Breast epithelium (tissue), 4 donors: ENCODE measurements at regions of chr12 and their contacts with region 1.

Region 1: DNA sequence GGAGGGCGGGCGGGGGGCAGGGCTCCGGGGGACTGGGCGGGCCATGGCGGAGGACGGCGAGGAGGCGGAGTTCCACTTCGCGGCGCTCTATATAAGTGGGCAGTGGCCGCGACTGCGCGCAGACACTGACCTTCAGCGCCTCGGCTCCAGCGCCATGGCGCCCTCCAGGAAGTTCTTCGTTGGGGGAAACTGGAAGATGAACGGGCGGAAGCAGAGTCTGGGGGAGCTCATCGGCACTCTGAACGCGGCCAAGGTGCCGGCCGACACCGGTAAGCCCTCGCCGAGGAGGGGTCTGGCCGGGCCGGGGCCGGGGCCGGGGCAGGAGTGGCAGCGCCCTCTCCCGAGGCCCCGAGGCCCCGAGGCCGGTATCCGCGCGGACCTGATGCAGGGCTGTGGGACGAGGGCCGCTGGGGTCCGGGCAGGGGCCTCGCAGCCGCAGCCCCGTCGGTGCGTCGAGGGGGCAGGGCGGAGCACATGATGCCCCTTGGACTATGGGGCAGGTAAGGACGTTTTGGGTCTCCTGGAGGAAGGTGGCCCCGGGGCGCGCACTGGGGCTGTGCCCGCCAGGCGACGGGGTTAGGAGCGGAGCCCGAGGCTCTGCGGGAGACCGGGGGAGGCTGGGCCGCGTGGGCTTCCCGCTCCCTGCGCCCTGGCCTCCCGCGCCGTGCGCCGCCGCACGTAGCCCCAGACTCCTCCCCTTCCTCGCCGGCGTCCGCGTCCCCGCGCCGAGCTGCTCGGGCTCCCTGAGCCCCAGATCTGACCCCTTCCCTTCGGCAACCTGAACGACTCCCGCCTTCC is at the start of gene TPI1:
- DNase-seq: peak; percentile 68 to 90
- H3K4me3 ChIP-seq: peak within 1 kb of the TSS; percentile 90 to 100 (median 94)
- H3K27ac ChIP-seq: peak within 1 kb of the TSS; percentile 95 to 96
- H3K4me1 ChIP-seq: peaks cover 5 to 27% of the 10 kb centered on the region in 2 donors
- H3K27me3 ChIP-seq: no peaks in the 10 kb centered on the region
- CTCF ChIP-seq: peak in 1 of 3 donors; percentile 12
- POLR2A ChIP-seq: peak; percentile 94
- total RNA-seq, gene TPI1: 297 to 386 (median 351) TPM

Region 2: DNA sequence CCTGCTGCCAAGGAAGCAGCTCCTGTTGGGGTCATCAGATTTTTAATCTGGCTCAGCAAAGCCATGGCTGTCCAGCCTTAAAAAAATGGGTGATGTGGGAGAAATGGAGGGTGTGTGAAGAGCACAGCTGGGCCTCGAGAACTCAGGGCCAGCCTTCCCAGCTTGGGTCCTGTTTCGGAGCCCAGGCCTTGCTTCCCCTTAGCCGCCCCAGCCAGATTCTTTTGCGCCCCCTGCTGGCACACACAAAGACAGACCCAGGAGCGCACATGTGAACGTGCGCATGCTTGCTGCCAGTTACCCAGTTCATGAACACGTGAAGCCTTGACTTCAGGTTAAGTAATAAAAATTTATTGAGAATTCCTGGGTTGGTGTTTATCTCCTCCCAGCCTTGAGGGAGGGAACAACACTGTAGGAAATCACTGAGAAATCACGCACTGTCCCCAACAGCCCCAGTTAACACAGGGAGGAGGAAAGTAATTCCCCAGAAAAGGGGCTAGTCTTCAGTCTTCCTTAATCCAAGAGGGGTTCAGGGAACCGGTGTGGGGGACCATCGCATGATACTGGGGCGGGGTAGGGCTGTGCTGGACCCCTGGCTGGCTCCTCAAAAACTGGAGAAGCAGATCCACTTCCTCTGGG is 97.5 kb after region 1 on chr12:
- intact Hi-C with region 1: loop called (anchors 10 kb)
- DNase-seq: peak; percentile 86 to 90
- H3K4me3 ChIP-seq: peak overlapping the region in 2 of 3 donors; percentile 76 to 78
- H3K27ac ChIP-seq: peak overlapping the region; percentile 98 to 99
- H3K4me1 ChIP-seq: peaks cover 12 to 42% of the 10 kb centered on the region in 2 donors
- H3K27me3 ChIP-seq: no peaks in the 10 kb centered on the region
- CTCF ChIP-seq: peak; percentile 82 to 95 (median 90)
- POLR2A ChIP-seq: no peak